Sigmoid colon (tissue), 7 donors: ENCODE measurements at regions of chr12 and their contacts with region 1.

Region 1: DNA sequence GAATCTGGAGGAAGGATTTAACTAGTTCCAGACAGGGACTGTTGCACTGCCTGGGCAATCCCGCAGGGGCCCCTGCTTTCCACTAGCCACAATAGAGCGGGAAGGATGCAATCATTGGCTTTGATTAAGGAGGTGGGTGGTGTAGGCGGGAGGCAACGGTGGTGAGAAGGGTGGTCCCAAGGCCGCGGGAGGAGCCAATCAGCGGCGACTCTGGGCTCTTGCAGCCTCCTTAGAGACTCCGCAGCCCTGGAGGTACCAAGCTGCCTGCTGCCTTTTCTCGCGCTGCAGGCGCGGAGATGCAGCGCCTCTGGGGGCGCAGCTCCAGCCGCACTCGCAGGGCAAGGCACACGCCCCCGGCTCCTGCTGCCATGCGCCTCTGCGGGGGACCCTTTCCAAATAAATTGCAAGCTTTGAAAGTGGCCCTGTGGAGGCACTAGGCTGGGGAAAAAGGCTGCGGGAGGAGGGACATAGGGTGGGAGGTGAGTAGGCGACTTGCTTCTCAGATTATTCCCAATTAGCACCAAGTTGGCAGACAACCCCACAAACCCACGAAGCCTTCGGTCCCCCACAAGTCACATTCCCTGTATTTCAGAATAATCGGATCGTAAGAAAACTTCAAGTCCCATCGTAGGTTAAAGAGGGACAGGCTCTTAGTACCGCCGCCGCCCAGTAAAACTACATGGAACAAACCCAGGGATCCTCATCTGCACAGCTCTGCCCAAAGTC is 858 bp upstream of the KCNA1 start:
- DNase-seq: peak; percentile 60
- H3K4me3 ChIP-seq: peak overlapping the region in 3 of 4 donors; percentile 40 to 62 (median 55)
- H3K27ac ChIP-seq: peak overlapping the region in 2 of 4 donors; percentile 52 to 59
- H3K4me1 ChIP-seq: peaks cover 0 to 32% (median 29%) of the 10 kb centered on the region in 4 donors
- H3K27me3 ChIP-seq: peaks cover 10 to 48% (median 26%) of the 10 kb centered on the region in 3 donors
- CTCF ChIP-seq: no peak
- EP300 ChIP-seq: no peak
- POLR2A ChIP-seq: no peak

Region 2: DNA sequence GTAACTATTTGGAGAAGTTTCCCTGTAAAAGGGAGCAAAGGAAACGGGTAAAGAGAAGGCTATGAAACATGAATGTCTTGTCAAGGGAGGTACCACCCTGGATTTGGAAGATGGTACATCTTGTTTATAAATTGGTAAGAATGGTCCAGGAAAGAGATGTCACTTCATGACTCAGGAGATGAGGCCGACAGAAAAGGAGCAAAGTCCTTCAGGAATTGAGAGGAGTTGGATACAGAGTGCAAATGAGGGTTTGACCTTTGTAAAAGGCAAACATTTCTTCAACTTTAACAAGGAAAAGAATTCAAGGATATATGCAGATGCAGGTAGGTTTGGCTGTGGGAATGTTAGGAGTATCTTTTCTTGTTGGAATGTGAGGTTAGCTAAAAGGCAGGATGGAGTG is 229.1 kb before region 1 on chr12:
- intact Hi-C with region 1: no loop called
- DNase-seq: no peak
- H3K4me3 ChIP-seq: no peak overlapping the region
- H3K27ac ChIP-seq: no peak overlapping the region
- H3K4me1 ChIP-seq: no peaks in the 10 kb centered on the region
- H3K27me3 ChIP-seq: no peaks in the 10 kb centered on the region
- CTCF ChIP-seq: no peak
- EP300 ChIP-seq: no peak
- POLR2A ChIP-seq: no peak

Region 3: GRCh38 chr12:4743046-4743445 is 165.8 kb before region 1 on chr12:
- intact Hi-C with region 1: no loop called
- DNase-seq: no peak
- H3K4me3 ChIP-seq: no peak overlapping the region
- H3K27ac ChIP-seq: no peak overlapping the region
- H3K4me1 ChIP-seq: no peaks in the 10 kb centered on the region
- H3K27me3 ChIP-seq: no peaks in the 10 kb centered on the region
- CTCF ChIP-seq: no peak
- EP300 ChIP-seq: no peak
- POLR2A ChIP-seq: no peak

Region 4: GRCh38 chr12:4997939-4998338 is 89.1 kb after region 1 on chr12:
- intact Hi-C with region 1: loop called (anchors 5 kb)
- DNase-seq: peak; percentile 79
- H3K4me3 ChIP-seq: no peak overlapping the region
- H3K27ac ChIP-seq: peak overlapping the region in 3 of 4 donors; percentile 30 to 77 (median 65)
- H3K4me1 ChIP-seq: peaks cover 0 to 18% (median 13%) of the 10 kb centered on the region in 4 donors
- H3K27me3 ChIP-seq: no peaks in the 10 kb centered on the region
- CTCF ChIP-seq: no peak
- EP300 ChIP-seq: no peak
- POLR2A ChIP-seq: no peak